Aorta (tissue), 5 donors: ENCODE measurements at regions of chr7 and their contacts with region 1.

Region 1: GRCh38 chr7:102912742-102913141 is at the start of gene LRRC17:
- DNase-seq: no peak
- ATAC-seq: peak; percentile 55
- H3K4me3 ChIP-seq: peak within 1 kb of the TSS; percentile 59 to 83
- H3K27ac ChIP-seq: peak within 1 kb of the TSS; percentile 71 to 77
- H3K4me1 ChIP-seq: peaks cover 6 to 9% of the 10 kb centered on the region in 2 donors
- H3K27me3 ChIP-seq: no peaks in the 10 kb centered on the region
- total RNA-seq, gene LRRC17: 8.1 to 30.5 TPM

Region 2: DNA sequence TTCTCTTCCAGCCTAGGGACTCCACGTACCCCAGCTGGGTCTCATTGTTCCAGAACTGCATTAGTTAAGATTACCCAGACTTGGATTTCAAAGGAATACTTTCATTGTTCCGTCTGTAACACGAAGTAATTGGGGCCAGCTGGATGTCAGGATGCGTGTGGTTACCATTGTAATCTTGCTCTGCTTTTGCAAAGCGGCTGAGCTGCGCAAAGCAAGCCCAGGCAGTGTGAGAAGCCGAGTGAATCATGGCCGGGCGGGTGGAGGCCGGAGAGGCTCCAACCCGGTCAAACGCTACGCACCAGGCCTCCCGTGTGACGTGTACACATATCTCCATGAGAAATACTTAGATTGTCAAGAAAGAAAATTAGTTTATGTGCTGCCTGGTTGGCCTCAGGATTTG is 21.0 kb after region 1 on chr7:
- intact Hi-C with region 1: no loop called
- DNase-seq: peak; percentile 89 to 90
- ATAC-seq: peak; percentile 90
- H3K4me3 ChIP-seq: no peak overlapping the region
- H3K27ac ChIP-seq: peak overlapping the region; percentile 77 to 98
- H3K4me1 ChIP-seq: peaks cover 3 to 11% of the 10 kb centered on the region in 2 donors
- H3K27me3 ChIP-seq: no peaks in the 10 kb centered on the region

Region 3: DNA sequence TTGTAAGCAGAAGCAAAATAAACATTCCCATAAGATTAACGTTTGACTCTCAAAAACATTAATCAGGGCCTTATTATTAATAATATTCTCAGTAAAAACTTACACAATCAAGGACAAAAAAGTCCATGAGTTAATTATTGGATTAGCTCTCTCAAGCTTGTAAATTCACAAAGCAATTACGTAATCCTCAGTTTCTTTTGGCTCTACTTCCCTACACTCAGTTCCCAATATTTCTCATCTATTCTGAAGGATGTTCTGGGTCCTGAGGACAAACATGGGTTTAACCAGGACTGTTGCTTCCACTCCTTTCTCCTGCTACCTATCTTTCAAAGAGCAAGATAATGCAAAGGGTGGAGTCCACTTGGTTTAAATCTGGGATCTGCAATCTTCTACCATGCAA is 146.7 kb after region 1 on chr7:
- intact Hi-C with region 1: loop called (anchors 10 kb)
- DNase-seq: no peak
- ATAC-seq: peak; percentile 64
- H3K4me3 ChIP-seq: no peak overlapping the region
- H3K27ac ChIP-seq: no peak overlapping the region
- H3K4me1 ChIP-seq: peaks cover 1 to 3% of the 10 kb centered on the region in 2 donors
- H3K27me3 ChIP-seq: no peaks in the 10 kb centered on the region

Region 4: DNA sequence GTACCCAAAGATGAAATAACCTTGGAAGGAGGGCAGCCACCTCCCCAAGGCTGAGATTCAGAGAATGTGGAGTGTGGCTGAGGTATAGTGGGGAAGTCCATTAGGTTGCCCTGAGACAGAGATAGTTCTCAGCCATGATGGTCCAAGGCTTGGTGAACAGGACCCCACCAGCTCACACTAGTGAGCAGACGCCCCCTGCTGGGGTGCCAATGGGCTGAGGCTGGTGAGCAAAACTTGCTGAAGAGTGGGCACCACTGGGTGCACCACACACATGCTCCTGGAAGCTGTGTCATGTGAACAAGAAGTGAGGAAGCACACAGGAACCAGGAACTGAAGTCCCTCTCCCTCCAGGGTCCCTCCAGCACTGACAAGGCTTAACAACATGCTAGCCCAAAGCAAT is 152.9 kb after region 1 on chr7:
- intact Hi-C with region 1: loop called in 1 of 2 experiments (anchors 10 kb)
- DNase-seq: peak; percentile 58 to 75
- ATAC-seq: peak; percentile 42
- H3K4me3 ChIP-seq: no peak overlapping the region
- H3K27ac ChIP-seq: no peak overlapping the region
- H3K4me1 ChIP-seq: no peaks in the 10 kb centered on the region
- H3K27me3 ChIP-seq: no peaks in the 10 kb centered on the region

Region 5: DNA sequence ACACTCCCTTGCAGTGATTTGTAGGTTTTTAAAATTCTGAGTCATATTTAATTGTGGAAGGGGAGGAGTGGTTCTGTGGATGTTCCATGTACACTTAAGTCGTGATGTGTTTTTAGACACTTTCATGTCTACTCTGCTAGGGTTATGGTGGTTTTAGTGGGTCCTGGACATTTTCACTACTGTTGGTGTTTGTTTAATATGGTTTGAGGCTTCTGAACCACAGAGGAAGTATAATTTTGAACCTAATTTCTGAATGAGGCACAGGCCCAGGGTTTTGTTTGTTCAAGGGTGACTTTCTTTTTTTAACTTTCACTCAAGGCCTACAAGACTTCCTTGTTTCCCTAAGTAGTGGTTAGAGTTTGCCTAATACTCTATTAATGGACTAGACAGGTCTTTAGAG is 520.0 kb after region 1 on chr7:
- intact Hi-C with region 1: no loop called
- DNase-seq: no peak
- ATAC-seq: no peak
- H3K4me3 ChIP-seq: no peak overlapping the region
- H3K27ac ChIP-seq: no peak overlapping the region
- H3K4me1 ChIP-seq: no peaks in the 10 kb centered on the region
- H3K27me3 ChIP-seq: no peaks in the 10 kb centered on the region